MCF 10A (cell line): ENCODE measurements at regions of chr9 and their contacts with region 1.

Region 1: GRCh38 chr9:131366761-131367401 is 27.0 kb upstream of the PRRC2B start:
- DNase-seq: peak; percentile 70
- H3K4me3 Mint-ChIP-seq: no peak overlapping the region
- H3K27ac Mint-ChIP-seq: peak overlapping the region; percentile 43
- H3K4me1 Mint-ChIP-seq: peaks cover 7% of the 10 kb centered on the region
- H3K27me3 Mint-ChIP-seq: no peaks in the 10 kb centered on the region
- CTCF ChIP-seq: no peak

Region 2: DNA sequence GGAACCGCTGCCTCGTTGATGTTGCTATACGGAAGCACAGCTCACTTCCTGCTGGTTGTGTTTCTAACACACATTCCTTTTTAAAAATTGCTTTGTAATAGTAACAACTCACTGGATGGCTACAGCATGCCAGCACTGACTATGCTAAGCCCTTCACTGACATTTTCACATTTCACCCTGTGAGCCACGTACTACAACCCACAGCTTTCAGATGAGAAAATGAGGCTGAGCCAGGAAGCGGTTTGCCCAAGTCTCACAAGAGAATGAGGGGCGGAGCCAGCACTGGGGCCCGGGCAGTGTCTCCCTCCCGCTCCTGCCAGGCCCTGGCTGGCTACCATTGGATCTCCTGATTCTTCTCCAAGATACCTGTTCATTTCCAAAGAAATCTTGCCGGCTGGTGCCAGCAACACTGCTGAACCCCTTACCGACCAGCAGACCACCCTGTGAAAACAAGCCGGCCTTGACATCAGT is 128.9 kb before region 1 on chr9:
- CTCF ChIA-PET with region 1: no interaction called
- POLR2A ChIA-PET with region 1: no interaction called
- intact Hi-C with region 1: no loop called
- DNase-seq: peak; percentile 19
- H3K4me3 Mint-ChIP-seq: no peak overlapping the region
- H3K27ac Mint-ChIP-seq: no peak overlapping the region
- H3K4me1 Mint-ChIP-seq: no peaks in the 10 kb centered on the region
- H3K27me3 Mint-ChIP-seq: no peaks in the 10 kb centered on the region
- CTCF ChIP-seq: no peak

Region 3: DNA sequence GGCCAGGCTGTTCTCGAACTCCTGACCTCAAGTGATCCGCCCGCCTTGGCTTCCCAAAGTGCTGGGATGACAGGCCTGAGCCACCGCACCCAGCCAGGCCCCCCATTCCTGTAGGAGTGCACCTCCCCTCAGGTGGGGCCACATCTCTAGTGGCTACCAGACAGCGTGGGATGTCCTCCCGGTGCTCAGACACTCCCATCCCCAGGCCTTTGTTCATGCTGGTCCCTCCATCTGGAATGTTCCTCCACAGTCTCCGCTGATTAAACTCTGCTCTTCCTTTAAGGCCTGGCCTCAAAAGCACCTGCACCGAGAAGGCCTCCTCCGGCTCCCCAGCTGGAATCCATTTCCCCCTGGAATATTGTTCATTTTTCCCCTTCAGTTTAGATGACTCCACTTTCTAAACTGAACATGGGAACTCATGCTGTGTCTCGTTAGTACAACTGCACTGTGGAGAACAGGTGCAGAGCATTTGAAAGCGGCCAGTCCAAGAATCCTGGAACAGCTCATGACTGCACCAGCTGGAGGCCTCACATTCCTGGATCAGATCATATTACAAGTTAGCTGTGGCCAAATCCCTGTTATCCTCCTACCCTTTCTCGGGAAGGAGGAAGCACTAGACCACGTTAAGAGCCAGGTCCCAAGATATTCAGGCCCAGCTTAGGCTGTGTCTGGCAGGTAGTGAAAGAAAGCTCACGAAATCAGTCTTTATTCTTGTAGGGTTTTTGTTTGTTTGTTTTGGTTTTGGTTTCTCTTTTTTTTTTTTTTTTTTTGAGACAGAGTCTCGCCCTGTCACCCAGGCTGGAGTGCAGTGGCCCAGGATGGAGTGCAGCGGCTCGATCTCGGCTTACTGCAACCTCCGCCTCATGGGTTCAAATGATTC is 16.2 kb after region 1 on chr9:
- CTCF ChIA-PET with region 1: interaction called, 3 read pairs
- POLR2A ChIA-PET with region 1: interaction called, 29 read pairs
- intact Hi-C with region 1: no loop called
- DNase-seq: peak; percentile 82
- H3K4me3 Mint-ChIP-seq: no peak overlapping the region
- H3K27ac Mint-ChIP-seq: no peak overlapping the region
- H3K4me1 Mint-ChIP-seq: peaks cover 8% of the 10 kb centered on the region
- H3K27me3 Mint-ChIP-seq: no peaks in the 10 kb centered on the region
- CTCF ChIP-seq: no peak